Cardiac septum (tissue), 1 donor: ENCODE measurements at regions of chr6 and their contacts with region 1.

Region 1: DNA sequence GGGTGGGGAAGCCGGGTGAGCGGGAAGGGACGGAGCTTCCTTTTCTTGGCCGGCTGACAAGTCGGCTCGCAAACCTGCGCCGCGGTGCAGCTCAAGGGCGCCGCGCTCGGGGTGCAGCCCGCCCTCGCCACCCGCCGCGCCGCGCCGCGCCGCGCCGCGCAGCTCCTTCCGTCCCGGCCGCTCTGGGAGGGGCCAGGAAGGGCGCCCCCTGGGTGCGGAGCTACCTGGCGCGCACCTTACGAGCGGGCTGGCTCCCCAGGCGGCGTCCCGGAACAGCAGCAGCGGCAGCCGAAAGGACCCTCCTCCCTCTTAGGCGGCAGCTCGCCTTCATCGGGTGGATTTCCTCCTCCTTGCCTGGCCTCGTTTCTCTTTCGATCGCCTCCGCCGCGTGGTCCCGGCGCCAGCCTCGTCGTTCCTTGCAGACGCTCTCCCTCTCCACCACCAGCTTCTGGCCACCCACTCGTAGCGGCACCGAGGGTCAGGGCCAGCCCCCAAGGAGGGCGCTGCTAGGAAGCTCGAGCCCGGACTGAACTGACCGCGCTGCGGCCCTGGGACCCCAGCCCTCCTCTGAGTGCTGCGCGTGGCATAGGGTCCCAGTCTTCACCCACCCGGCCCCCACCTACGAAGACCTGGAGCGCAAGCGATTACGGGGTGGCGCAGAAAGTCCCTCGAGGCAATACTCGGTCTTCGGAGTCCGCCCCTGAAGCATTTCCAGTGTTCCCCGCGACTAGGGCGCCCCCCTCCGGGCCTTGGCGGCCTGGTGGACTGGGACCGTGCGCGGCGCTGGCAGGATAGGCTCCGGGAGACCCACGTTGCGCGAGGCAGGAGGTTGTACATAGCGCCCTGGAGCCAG is at the start of gene MAP3K5:
- DNase-seq: peak; percentile 96
- total RNA-seq, gene MAP3K5: 17.6 TPM

Region 2: GRCh38 chr6:136582711-136583471 is 209.7 kb before region 1 on chr6:
- intact Hi-C with region 1: loop called (anchors 2 kb)
- DNase-seq: no peak

Region 3: GRCh38 chr6:136643850-136644596 is 148.6 kb before region 1 on chr6:
- intact Hi-C with region 1: loop called (anchors 1 kb)
- DNase-seq: peak; percentile 90

Region 4: DNA sequence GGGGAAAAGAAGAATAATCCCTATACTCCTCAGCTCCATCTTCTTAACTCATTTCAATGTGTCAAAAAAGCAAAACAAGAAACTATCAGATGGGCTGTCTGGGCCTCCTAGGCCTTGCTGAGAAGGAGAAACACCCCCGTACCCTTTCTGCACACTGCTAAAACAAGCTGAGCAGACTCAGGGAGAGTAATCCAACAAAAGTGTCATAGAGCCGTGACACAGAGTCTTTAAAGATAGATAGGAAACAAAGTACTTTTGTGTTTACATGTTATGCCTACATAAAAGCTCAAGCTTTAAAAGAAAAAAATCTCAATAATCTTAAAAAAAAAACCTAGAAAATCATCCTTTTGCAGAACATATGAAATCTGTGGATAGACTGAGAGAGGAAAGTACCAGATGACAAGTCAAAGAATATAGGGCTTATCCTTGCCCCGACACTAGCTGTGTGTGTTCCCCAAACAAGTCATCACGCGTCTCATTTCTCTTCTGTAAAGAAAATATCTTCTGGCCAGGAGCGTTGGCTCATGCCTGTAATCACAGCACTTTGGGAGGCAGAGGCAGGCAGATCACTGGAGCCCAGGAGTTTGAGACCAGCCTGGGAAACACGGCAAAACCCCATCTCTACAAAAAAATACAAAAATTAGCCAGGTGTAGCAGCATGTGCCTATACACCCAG is 81.6 kb before region 1 on chr6:
- intact Hi-C with region 1: loop called (anchors 5 kb)
- DNase-seq: no peak

Region 5: DNA sequence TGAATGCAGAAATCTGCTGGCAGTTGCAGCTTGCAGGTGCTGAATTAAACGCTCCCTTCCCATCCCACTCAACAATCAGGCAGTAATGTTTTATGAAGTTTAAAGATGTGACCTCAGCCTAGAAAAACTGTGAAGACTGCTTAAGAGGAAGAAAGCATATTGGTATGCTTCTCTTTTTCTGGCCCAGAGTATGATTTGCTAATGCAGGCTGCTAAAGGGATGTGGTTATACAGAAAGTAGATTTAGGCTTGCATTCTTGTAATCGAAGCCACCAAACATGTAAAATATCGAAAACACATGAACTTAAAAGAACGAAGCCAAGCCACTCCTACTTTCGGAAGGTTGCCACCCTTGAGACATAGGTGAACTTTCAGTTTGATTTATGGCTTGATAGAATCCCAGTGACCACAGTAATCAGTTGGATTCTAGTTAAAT is 41.1 kb before region 1 on chr6:
- intact Hi-C with region 1: no loop called
- DNase-seq: no peak

Region 6: GRCh38 chr6:137641474-137642077 is 848.9 kb after region 1 on chr6:
- intact Hi-C with region 1: no loop called
- DNase-seq: no peak